ENCODE measurements at regions of chr14 and their contacts with region 1.

Region 1: GRCh38 chr14:101628471-101628966 is 67.2 kb downstream of the DIO3 start:
- DNase-seq: peak; percentile 80 to 90 (median 90)
- ATAC-seq: peak; percentile 88 to 92
- H3K4me3 ChIP-seq: no peak overlapping the region
- H3K27ac ChIP-seq: no peak overlapping the region
- H3K4me1 ChIP-seq: no peaks in the 10 kb centered on the region
- H3K27me3 ChIP-seq: no peaks in the 10 kb centered on the region

Region 2: GRCh38 chr14:100383727-100384158 is 1244.8 kb before region 1 on chr14:
- intact Hi-C with region 1: loop called (anchors 2 to 10 kb)
- DNase-seq: peak; percentile 51 to 81 (median 76)
- ATAC-seq: peak; percentile 70 to 71
- H3K4me3 ChIP-seq: no peak overlapping the region
- H3K27ac ChIP-seq: no peak overlapping the region
- H3K4me1 ChIP-seq: peaks cover 2% of the 10 kb centered on the region
- H3K27me3 ChIP-seq: no peaks in the 10 kb centered on the region

Region 3: GRCh38 chr14:100645192-100645990 is 983.1 kb before region 1 on chr14:
- intact Hi-C with region 1: loop called in 1 of 4 experiments (anchors 5 kb)
- DNase-seq: peak; percentile 87 to 94 (median 90)
- ATAC-seq: peak; percentile 89 to 91
- H3K4me3 ChIP-seq: no peak overlapping the region
- H3K27ac ChIP-seq: no peak overlapping the region
- H3K4me1 ChIP-seq: no peaks in the 10 kb centered on the region
- H3K27me3 ChIP-seq: no peaks in the 10 kb centered on the region

Region 4: DNA sequence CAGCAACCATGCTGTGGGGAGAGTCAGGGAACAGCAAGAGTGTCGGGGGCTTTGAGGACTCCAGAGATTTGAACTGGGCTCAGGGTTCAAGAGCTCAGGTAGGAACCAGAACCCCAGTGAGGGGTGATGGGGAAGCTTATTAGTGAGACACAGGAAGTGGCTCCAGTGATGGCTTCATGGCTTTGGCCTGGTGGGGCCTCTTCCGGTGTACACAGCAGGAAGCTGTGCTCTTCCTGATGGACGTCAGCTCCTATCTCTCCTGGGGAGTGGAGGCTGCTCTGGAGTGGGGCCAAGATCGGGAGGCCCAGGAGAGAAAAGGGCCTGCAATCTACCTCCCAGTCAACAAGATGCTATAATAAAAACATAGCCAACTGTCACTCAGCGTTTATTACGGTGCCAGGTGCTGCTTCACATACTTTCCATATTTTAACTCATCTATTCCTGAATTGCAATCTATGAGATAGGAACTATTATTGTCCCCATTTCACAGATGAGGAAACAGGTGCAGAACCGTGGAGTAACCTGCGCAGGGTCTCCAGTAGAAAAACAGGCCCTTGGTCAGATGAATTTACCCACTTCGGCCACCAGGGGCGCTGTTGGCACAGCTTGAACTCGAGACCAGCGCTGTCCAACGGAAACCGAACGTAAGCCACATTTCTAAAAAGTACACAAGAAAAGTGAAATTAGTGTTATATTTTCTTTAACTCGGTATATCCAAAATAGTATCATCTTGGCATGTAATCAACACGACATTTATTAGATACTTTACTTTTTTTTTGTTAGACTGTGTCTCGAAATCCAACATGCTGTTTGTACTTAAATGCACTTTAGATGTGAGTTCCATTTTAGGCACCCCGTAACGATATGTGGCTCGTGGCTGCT is 965.4 kb before region 1 on chr14:
- intact Hi-C with region 1: loop called in 1 of 4 experiments (anchors 10 kb)
- DNase-seq: peak; percentile 68 to 84 (median 77)
- ATAC-seq: peak in 1 of 2 donors; percentile 57
- H3K4me3 ChIP-seq: no peak overlapping the region
- H3K27ac ChIP-seq: no peak overlapping the region
- H3K4me1 ChIP-seq: no peaks in the 10 kb centered on the region
- H3K27me3 ChIP-seq: no peaks in the 10 kb centered on the region

Region 5: DNA sequence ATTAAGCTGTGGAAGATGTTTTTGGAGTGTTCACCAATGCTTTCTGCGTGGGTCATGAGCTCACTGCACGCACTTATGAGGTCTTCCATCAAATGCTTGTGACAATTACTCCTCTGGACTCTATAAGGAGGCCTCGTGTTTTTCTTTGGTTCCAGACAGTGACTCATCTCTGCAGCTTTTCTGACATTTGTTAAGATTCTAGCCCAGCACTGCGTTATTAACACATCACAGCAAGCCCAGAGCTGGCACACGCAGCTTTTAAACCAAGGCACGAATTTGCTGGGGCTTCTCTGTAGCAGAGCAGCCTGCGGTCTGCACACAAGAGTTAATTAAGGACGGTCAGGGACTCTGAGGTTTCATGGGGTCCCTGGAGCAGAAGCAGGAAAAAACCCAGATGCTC is 785.7 kb before region 1 on chr14:
- intact Hi-C with region 1: loop called in 1 of 4 experiments (anchors 10 kb)
- DNase-seq: no peak
- ATAC-seq: peak; percentile 18 to 58
- H3K4me3 ChIP-seq: no peak overlapping the region
- H3K27ac ChIP-seq: no peak overlapping the region
- H3K4me1 ChIP-seq: no peaks in the 10 kb centered on the region
- H3K27me3 ChIP-seq: no peaks in the 10 kb centered on the region

Region 6: DNA sequence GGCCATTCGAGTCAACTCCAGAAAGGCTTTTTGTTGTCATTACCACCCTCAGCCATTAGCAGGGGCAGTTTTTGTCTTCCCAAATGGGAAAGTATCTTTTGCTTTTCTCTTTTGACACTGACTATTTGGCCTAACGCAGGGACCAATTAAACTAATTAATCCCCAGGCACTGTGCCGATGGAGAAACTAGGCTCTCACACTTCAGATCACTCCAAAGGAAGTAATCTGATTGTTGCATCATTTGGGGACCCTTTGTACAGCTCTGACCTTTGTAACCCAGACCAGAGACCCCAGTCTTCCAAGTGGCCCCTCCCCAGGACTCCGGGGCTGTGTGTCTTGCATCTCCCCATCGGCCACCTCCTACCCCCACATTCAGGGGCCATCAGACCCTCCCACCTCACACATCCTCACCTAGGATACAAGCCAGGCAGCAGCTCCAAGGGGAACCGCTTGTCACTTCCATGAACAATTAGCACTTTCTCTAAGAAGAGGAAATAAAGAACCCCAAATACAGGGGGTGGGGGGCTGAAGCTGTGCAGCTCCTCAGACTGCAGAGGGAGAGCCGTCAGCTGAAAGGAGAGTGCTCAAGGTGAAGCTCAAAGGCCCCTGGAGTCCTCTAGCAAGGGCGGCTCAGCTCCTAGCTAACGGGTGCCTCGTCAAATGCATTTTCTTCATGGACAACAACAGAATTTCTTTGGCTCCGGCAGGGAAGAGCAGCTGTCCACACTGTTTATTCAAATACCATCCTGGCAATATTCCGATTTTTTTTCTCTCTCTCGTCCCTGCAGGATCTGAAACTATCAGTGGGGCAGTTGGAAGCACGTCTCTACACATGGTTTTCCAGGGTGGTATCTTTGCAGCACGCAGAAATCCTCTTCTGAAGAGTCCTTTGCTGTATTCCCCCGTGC is 131.5 kb before region 1 on chr14:
- intact Hi-C with region 1: no loop called
- DNase-seq: peak in 1 of 3 donors; percentile 14
- ATAC-seq: no peak
- H3K4me3 ChIP-seq: no peak overlapping the region
- H3K27ac ChIP-seq: no peak overlapping the region
- H3K4me1 ChIP-seq: no peaks in the 10 kb centered on the region
- H3K27me3 ChIP-seq: no peaks in the 10 kb centered on the region

Region 7: DNA sequence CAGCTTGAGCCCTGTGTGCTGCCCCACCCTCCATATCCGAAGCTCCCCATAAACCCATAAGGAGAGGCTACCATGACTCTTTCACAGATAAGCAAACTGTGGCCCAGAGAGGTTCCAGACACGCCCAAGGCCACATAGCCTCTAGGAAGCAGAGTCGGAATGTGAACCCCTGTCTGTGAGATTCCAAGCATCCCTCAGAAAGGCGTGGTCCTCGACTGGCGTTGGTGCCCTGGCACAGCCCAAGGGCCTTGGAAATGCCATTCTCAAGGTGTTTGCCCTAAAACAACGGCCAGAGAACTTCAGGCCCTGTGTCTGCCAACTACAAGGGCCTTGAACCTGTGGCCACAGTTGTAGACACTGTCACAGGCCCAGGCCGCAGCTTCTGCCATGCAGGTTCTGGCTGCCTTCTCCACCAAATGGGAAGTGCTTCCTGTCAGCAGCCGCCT is 75.7 kb before region 1 on chr14:
- intact Hi-C with region 1: no loop called
- DNase-seq: peak in 1 of 3 donors; percentile 11
- ATAC-seq: no peak
- H3K4me3 ChIP-seq: no peak overlapping the region
- H3K27ac ChIP-seq: no peak overlapping the region
- H3K4me1 ChIP-seq: no peaks in the 10 kb centered on the region
- H3K27me3 ChIP-seq: no peaks in the 10 kb centered on the region

Measured in right cardiac atrium (tissue), 5 donors.